GM10248 (cell line): ENCODE measurements at regions of chr21 and their contacts with region 1.

Region 1: GRCh38 chr21:42392721-42393442 is 3.0 kb downstream of the TMPRSS3 start:
- DNase-seq: peak; percentile 72
- CTCF ChIP-seq: no peak

Region 2: DNA sequence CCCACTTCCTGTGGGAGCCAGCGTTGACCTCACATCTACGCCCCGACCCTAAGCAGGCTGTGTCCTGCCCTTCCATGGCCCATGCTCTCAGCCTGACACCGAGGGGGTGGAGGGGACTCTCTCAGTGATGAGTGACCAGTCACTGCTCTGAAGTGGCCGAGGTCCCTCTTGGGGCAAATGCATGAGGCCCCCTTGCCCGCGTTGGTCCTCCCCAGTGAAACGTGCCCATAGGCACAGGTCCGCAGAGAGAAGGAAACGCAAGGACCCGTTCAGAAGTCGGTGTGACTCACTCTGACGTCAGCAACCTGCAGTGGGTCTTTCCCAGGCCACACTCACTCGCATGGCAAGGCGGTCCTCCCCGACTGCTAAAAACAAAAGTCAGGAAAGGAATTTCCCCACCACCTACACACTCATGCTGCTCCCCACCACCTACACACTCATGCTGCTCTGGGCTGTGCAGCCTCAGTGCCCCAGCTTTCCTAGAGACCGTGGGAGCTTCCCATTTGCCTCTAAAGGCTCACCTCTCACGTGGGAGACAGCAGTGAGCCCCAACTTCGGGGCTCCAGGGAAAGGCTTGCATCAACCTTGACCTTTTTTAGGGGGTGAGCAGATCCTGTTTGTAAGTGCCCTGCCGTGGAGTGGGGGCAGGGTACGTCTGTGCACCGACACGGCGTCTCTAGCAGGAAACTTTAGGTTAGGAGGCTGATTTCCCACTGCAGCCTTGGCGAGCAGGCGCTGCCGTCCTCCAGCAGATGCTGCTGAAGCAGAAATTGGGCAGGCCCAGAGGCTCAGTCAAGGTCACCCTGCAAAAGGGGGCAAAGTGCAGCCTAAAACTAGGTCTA is 22.3 kb after region 1 on chr21:
- CTCF ChIA-PET with region 1: interaction called, 13 read pairs
- POLR2A ChIA-PET with region 1: no interaction called
- DNase-seq: peak; percentile 90
- CTCF ChIP-seq: no peak

Region 3: GRCh38 chr21:42424914-42425541 is 32.1 kb after region 1 on chr21:
- CTCF ChIA-PET with region 1: interaction called, 13 read pairs
- POLR2A ChIA-PET with region 1: interaction called, 3 read pairs
- DNase-seq: no peak
- CTCF ChIP-seq: no peak

Region 4: DNA sequence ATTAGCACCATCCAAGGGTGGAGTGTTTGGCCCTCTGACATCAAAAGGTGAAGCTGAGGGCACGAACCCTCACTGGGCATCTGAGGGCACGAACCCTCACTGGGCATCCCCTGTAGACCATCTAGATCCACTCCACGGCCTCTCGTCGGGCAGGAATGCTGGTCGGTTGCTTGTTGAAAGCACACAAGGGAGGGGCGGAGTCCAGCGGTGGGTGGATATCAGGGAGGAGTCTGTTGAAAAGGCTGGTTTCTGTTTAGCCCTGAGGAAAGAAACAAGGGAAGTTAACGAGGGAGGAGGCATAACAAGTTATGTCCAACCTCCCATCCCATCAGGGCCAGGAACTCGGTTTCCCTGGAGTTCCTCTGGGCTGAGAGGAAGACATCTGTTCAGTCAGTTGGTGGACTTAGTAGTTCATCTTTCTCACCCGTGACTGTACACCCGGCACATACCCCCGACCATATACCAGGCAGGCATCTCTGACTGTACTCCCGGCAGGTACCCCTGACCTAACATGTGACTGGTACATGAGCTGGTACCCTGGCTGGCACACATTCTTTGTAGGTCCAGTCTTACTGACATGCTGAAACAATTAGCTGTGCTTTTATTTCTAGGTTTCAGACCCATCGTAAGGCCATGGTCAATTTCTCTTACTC is 228.4 kb after region 1 on chr21:
- CTCF ChIA-PET with region 1: no interaction called
- POLR2A ChIA-PET with region 1: no interaction called
- DNase-seq: no peak
- CTCF ChIP-seq: no peak